K562 (cell line): ENCODE measurements at regions of chr22 and their contacts with region 1.

Region 1: DNA sequence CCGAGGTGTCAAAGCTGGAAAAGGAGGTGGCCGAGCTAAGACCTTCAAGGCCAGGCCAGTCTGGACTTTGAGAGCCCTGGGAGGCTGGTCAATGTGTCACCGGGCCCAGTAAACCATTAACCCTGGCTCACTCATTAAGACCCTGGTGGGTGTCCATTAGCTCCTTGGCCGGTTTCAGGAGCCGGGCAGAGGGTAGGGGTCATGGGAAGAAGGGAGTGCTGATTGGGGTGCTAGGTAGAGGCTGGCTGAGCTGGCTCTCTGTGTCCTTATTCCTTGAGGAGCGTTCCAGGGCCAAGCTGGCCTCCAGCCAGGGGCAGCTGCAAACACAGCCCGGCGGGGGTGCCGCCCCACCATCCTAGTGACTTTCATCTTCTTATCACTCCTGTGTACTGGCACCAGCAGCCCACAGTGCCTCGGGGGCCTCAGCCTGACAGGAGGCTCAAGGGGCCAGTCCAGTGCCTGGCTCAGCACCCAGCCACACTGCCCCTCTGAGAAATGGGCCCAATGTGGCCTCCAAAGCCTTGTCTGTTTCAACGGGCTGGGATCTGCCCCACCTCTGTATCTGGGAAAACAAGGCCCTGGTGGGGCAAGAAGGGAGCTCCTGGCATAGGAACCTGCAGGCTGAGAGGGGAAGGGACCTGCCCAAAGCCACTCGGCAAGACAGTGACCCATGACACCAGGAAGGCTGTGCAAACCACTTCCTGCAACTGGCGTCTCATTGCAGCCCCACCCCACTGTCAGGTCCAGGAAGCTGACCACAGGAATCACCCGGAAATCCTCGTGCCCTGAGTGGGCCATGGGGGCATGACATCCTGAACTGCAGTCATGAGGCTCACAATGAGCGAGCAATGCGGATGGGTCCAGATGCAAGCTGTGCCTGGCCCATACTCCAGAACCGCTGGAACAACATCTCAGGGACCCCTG is 15.1 kb upstream of the RGL4 start:
- DNase-seq: no peak
- ATAC-seq: no peak
- H3K4me3 ChIP-seq: no peak overlapping the region
- H3K27ac ChIP-seq: no peak overlapping the region
- H3K4me1 ChIP-seq: peaks cover 0 to 5% of the 10 kb centered on the region in 2 experiments; a peak in 2 of 5 replicates
- H3K27me3 ChIP-seq: no peaks in the 10 kb centered on the region
- CTCF ChIP-seq: no peak
- EP300 ChIP-seq: no peak
- POLR2A ChIP-seq: no peak
- RAD21 ChIP-seq: no peak

Region 2: DNA sequence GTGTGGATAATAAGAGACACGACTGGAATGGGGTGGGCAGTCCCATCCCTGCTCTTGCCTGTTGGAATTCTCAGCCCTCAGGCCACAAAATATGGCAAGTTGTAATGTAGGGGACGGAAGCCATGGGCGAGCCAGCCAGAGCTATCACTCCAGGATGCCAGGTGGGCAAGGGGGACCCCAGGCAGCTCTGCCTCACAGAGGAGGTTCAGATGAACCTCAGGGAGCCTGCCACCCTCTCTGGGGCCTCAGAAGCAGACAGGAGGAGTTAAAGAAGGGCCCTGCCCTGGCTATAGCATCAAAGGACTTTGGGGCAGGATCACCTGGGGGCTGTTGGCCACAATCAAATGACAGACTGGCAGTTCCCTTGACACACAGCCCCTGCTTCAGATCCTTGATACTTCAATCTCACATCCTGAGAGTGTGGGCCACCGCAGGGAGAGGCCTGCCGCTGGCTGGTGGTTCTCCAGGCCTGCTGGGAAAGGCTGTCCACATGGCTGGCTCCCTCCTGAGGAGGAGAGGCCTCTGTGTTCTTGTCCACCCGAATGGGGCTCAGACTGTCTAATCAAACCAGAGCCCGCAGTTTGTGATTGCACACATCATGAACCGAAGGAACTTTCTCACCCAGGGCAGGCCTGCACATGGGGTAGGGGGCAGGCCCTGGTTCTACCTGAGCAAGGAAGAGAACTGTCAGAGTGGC is 127.1 kb before region 1 on chr22:
- CTCF ChIA-PET with region 1: no interaction called
- POLR2A ChIA-PET with region 1: no interaction called
- in situ Hi-C with region 1: no loop called
- intact Hi-C with region 1: no loop called
- DNase-seq: no peak
- ATAC-seq: no peak
- H3K4me3 ChIP-seq: no peak overlapping the region
- H3K27ac ChIP-seq: no peak overlapping the region
- H3K4me1 ChIP-seq: no peaks in the 10 kb centered on the region
- H3K27me3 ChIP-seq: no peaks in the 10 kb centered on the region
- CTCF ChIP-seq: no peak
- EP300 ChIP-seq: no peak
- POLR2A ChIP-seq: no peak
- RAD21 ChIP-seq: no peak

Region 3: GRCh38 chr22:24601217-24602104 is 925.7 kb after region 1 on chr22:
- CTCF ChIA-PET with region 1: no interaction called
- POLR2A ChIA-PET with region 1: no interaction called
- in situ Hi-C with region 1: loop called (anchors 5 kb)
- intact Hi-C with region 1: no loop called
- DNase-seq: no peak
- ATAC-seq: no peak
- H3K4me3 ChIP-seq: no peak overlapping the region
- H3K27ac ChIP-seq: no peak overlapping the region
- H3K4me1 ChIP-seq: peaks cover 2 to 19% of the 10 kb centered on the region in 2 experiments; a peak in 3 of 5 replicates
- H3K27me3 ChIP-seq: no peaks in the 10 kb centered on the region
- CTCF ChIP-seq: no peak
- EP300 ChIP-seq: no peak
- POLR2A ChIP-seq: no peak
- RAD21 ChIP-seq: no peak

Region 4: DNA sequence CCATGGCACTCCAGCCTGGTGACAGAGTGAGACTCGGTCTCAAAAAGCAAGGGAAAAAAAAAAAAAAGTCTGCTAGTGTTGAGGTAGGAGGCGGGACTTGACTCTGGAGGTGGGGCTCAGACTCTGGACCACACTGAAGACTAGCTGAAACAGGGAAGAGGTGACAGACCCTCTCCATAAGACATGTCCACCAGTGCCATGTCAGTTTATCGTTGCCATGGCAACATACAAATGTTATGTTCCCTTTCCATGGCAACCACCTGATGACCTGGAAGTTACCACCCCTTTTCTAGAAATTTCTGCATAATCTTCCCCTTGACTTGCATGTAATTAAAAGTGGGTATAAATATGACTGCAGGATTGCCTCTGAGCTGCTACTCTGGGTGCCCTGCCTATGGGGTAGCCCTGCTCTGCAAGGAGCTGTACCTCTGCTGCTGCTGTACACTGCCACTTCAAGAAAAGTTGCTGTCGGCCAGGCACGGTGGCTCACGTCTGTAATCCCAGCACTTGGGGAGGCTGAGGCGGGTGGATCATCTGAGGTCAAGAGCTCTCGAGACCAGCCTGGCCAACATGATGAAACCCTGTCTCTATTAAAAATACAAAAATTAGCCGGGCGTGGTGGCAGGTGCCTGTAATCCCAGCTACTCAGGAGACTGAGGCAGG is 1331.8 kb after region 1 on chr22:
- CTCF ChIA-PET with region 1: no interaction called
- POLR2A ChIA-PET with region 1: no interaction called
- in situ Hi-C with region 1: no loop called
- intact Hi-C with region 1: no loop called
- DNase-seq: no peak
- ATAC-seq: no peak
- H3K4me3 ChIP-seq: no peak overlapping the region
- H3K27ac ChIP-seq: no peak overlapping the region
- H3K4me1 ChIP-seq: no peaks in the 10 kb centered on the region
- H3K27me3 ChIP-seq: no peaks in the 10 kb centered on the region
- CTCF ChIP-seq: no peak
- EP300 ChIP-seq: no peak
- POLR2A ChIP-seq: no peak
- RAD21 ChIP-seq: no peak